Activated naive CD4-positive, alpha-beta T cell treated with anti-CD3 and anti-CD28 coated beads, Interleukin-2, amount 10 ng/mL, durations not matched to agents 7 days and 5 days (primary cell): ENCODE measurements at regions of chr15 and their contacts with region 1.

Region 1: GRCh38 chr15:81155375-81156218 is 21.5 kb downstream of the CFAP161 start:
- DNase-seq: peak; percentile 47
- H3K4me3 Mint-ChIP-seq: no peak overlapping the region
- H3K27ac Mint-ChIP-seq: peak overlapping the region; percentile 40
- H3K4me1 Mint-ChIP-seq: peaks cover 23% of the 10 kb centered on the region
- H3K27me3 Mint-ChIP-seq: peaks cover 14% of the 10 kb centered on the region

Region 2: DNA sequence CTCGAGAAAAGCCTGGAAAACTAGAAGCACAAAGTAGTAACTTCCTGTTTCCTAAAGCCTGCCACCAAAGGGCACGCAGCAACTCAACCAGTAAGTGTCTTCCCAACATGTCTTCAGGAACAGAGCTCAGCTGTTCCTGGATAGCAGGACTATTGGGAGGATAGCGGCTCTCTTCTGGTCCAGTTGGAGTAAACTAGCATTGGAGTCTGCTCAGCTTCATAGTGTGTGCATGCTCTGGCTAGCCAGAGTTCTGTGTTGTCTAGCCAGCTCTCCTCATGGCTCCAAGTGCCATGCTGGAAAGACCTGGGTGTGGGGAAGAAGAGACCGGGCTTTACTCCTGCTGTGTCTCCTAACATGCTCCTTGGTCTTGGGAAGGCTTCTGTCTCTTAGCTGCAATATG is 104.2 kb after region 1 on chr15:
- CTCF ChIA-PET with region 1: interaction called, 262 read pairs
- DNase-seq: no peak
- H3K4me3 Mint-ChIP-seq: no peak overlapping the region
- H3K27ac Mint-ChIP-seq: no peak overlapping the region
- H3K4me1 Mint-ChIP-seq: no peaks in the 10 kb centered on the region
- H3K27me3 Mint-ChIP-seq: peaks cover 38% of the 10 kb centered on the region

Region 3: GRCh38 chr15:81480645-81481053 is 325.1 kb after region 1 on chr15:
- CTCF ChIA-PET with region 1: no interaction called
- DNase-seq: no peak
- H3K4me3 Mint-ChIP-seq: no peak overlapping the region
- H3K27ac Mint-ChIP-seq: no peak overlapping the region
- H3K4me1 Mint-ChIP-seq: no peaks in the 10 kb centered on the region
- H3K27me3 Mint-ChIP-seq: peaks cover 4% of the 10 kb centered on the region